Activated naive CD4-positive, alpha-beta T cell treated with anti-CD3 and anti-CD28 coated beads, Interleukin-2, amount 10 ng/mL, durations not matched to agents 7 days and 5 days (primary cell): ENCODE measurements at regions of chr3 and their contacts with region 1.

Region 1: DNA sequence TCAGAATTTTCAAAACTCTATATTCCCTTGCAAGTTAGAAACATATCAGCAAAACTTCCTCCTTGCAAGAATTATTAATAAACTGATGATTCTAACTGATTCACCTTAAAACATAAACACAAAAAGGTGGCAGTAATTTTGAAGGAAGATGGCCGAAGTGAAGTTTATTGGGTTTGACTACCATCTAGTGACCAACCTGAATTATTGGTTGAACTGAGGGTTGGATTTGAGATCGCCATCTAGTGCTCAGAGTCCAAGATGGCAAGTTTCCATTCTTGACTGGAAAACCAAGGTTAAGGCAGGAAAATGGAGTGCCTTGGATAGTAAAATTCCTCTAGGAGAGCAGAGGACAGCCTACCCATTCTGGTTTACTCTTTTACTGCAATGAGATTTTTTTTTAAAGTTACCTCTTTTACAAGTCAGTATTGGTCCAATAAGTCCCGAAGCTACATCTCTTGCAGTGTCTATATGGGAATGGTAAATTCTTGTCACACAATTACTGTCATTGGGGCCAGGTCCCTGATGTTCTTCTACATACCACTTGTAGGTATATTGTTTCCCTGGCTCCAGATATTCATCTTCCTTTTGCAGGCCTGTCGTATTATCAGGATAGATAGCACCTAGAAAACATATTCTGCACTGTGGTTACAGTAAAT is 51.6 kb upstream of the CP start:
- DNase-seq: peak; percentile 34
- H3K4me3 Mint-ChIP-seq: no peak overlapping the region
- H3K27ac Mint-ChIP-seq: no peak overlapping the region
- H3K4me1 Mint-ChIP-seq: peaks cover 13% of the 10 kb centered on the region
- H3K27me3 Mint-ChIP-seq: peaks cover 14% of the 10 kb centered on the region

Region 2: GRCh38 chr3:148955544-148956346 is 317.5 kb before region 1 on chr3:
- CTCF ChIA-PET with region 1: interaction called, 76 read pairs
- DNase-seq: peak; percentile 34
- H3K4me3 Mint-ChIP-seq: no peak overlapping the region
- H3K27ac Mint-ChIP-seq: no peak overlapping the region
- H3K4me1 Mint-ChIP-seq: peaks cover 9% of the 10 kb centered on the region
- H3K27me3 Mint-ChIP-seq: peaks cover 3% of the 10 kb centered on the region

Region 3: GRCh38 chr3:149120051-149120972 is 152.9 kb before region 1 on chr3:
- CTCF ChIA-PET with region 1: interaction called, 115 read pairs
- DNase-seq: no peak
- H3K4me3 Mint-ChIP-seq: no peak overlapping the region
- H3K27ac Mint-ChIP-seq: no peak overlapping the region
- H3K4me1 Mint-ChIP-seq: peaks cover 5% of the 10 kb centered on the region
- H3K27me3 Mint-ChIP-seq: peaks cover 13% of the 10 kb centered on the region